ENCODE measurements at regions of chr11 and their contacts with region 1.

Region 1: GRCh38 chr11:34250732-34251639 is 106.8 kb downstream of the ABTB2 start:
- DNase-seq: peak; percentile 91
- ATAC-seq: peak; percentile 97
- H3K4me3 Mint-ChIP-seq: peak overlapping the region; percentile 45
- H3K27ac Mint-ChIP-seq: peak overlapping the region; percentile 1
- H3K4me1 Mint-ChIP-seq: peaks cover 54% of the 10 kb centered on the region
- H3K27me3 Mint-ChIP-seq: peaks cover 7% of the 10 kb centered on the region
- CTCF ChIP-seq: no peak

Region 2: GRCh38 chr11:34234086-34234740 is 16.8 kb before region 1 on chr11:
- CTCF ChIA-PET with region 1: interaction called, 5 read pairs
- POLR2A ChIA-PET with region 1: interaction called, 45 read pairs
- intact Hi-C with region 1: no loop called
- DNase-seq: peak; percentile 92
- ATAC-seq: peak; percentile 91
- H3K4me3 Mint-ChIP-seq: peak overlapping the region; percentile 27
- H3K27ac Mint-ChIP-seq: peak overlapping the region; percentile 86
- H3K4me1 Mint-ChIP-seq: peaks cover 70% of the 10 kb centered on the region
- H3K27me3 Mint-ChIP-seq: no peaks in the 10 kb centered on the region
- CTCF ChIP-seq: no peak

Region 3: DNA sequence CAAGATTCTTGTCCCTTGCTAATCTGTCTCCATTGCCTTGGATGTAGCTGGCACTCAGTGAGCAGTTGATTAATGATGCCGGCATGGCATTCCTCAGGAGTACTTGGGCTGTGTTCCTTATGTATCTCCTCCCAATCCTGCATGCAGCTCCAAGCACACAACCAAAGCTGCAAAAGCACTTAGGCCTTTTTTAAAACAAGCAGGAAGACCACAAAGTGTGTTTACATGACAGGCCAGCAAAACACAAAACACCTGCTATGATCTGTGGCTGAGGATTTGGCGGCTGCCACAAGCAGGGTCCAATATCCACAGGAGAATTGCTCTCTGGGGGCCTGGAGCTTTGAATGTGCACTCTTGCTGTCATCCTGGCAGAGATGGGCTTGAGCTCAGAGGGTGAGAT is 97.9 kb after region 1 on chr11:
- CTCF ChIA-PET with region 1: no interaction called
- POLR2A ChIA-PET with region 1: no interaction called
- intact Hi-C with region 1: no loop called
- DNase-seq: no peak
- ATAC-seq: no peak
- H3K4me3 Mint-ChIP-seq: no peak overlapping the region
- H3K27ac Mint-ChIP-seq: no peak overlapping the region
- H3K4me1 Mint-ChIP-seq: no peaks in the 10 kb centered on the region
- H3K27me3 Mint-ChIP-seq: peaks cover 8% of the 10 kb centered on the region
- CTCF ChIP-seq: no peak

Measured in activated CD8-positive, alpha-beta T cell treated with anti-CD3 and anti-CD28 coated beads for 36 hours (primary cell).